ENCODE measurements at regions of chr7 and their contacts with region 1.

Region 1: DNA sequence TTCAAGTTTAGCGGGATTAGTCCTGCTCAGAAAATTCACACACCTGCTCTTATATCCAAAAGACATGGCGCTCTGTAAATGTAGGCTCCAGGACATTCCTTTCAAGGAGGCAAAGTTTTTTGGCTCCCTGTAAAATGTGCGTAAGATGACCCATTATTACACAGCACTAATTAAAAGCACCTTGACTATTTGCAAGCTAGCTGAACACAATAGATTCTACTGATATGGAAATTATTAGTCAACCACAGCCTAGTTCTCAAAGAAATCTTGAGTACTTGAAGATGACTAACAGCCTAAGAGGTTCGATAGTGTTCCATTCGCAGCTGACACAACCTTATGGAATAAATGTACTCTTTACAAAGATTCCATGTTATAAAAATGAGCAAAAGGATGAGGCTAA is 175.2 kb downstream of the BMPER start:
- DNase-seq: no peak
- H3K4me3 ChIP-seq: no peak overlapping the region
- H3K27ac ChIP-seq: no peak overlapping the region
- H3K4me1 ChIP-seq: no peaks in the 10 kb centered on the region
- H3K27me3 ChIP-seq: no peaks in the 10 kb centered on the region
- CTCF ChIP-seq: no peak
- POLR2A ChIP-seq: no peak

Region 2: GRCh38 chr7:32879460-32879859 is 1201.1 kb before region 1 on chr7:
- intact Hi-C with region 1: no loop called
- DNase-seq: no peak
- H3K4me3 ChIP-seq: no peak overlapping the region
- H3K27ac ChIP-seq: peak overlapping the region; percentile 4
- H3K4me1 ChIP-seq: peaks cover 50% of the 10 kb centered on the region
- H3K27me3 ChIP-seq: no peaks in the 10 kb centered on the region
- CTCF ChIP-seq: no peak
- POLR2A ChIP-seq: no peak

Region 3: DNA sequence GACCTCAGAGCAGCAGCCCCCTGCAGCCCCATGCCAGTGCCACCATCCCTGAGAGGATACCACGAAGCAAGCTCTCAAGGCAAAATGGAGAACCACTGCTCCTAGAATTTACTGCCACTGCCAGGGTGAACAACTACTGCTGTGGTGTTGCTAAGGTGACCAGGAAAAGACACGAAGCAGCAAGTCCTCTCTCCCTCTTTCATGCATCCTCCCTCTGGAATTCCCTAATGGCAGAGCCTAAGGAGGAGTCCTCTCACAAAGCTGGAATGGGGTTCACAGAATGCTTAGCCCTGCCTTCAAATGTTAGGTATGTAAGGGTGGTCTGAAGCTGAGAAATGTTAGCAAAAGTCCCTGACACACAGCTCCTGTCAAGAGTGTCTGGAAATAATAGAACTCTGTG is 541.7 kb after region 1 on chr7:
- intact Hi-C with region 1: loop called (anchors 5 kb)
- DNase-seq: no peak
- H3K4me3 ChIP-seq: no peak overlapping the region
- H3K27ac ChIP-seq: no peak overlapping the region
- H3K4me1 ChIP-seq: no peaks in the 10 kb centered on the region
- H3K27me3 ChIP-seq: no peaks in the 10 kb centered on the region
- CTCF ChIP-seq: no peak
- POLR2A ChIP-seq: no peak

Measured in vagina (tissue), 2 donors.